PC-9 (cell line): ENCODE measurements at regions of chr9 and their contacts with region 1.

Region 1: GRCh38 chr9:74711341-74711740 is 176.4 kb downstream of the TRPM6 start:
- DNase-seq: no peak
- H3K4me3 ChIP-seq: no peak overlapping the region
- H3K27ac ChIP-seq: no peak overlapping the region
- H3K4me1 ChIP-seq: no peaks in the 10 kb centered on the region
- H3K27me3 ChIP-seq: no peaks in the 10 kb centered on the region
- CTCF ChIP-seq: no peak

Region 2: GRCh38 chr9:74645007-74645639 is 66.2 kb before region 1 on chr9:
- CTCF ChIA-PET with region 1: no interaction called
- POLR2A ChIA-PET with region 1: no interaction called
- intact Hi-C with region 1: loop called (anchors 10 kb)
- DNase-seq: no peak
- H3K4me3 ChIP-seq: no peak overlapping the region
- H3K27ac ChIP-seq: no peak overlapping the region
- H3K4me1 ChIP-seq: no peaks in the 10 kb centered on the region
- H3K27me3 ChIP-seq: no peaks in the 10 kb centered on the region
- CTCF ChIP-seq: peak; percentile 71

Region 3: GRCh38 chr9:74728176-74728575 is 16.8 kb after region 1 on chr9:
- CTCF ChIA-PET with region 1: no interaction called
- POLR2A ChIA-PET with region 1: interaction called, 10 read pairs
- intact Hi-C with region 1: no loop called
- DNase-seq: no peak
- H3K4me3 ChIP-seq: no peak overlapping the region
- H3K27ac ChIP-seq: no peak overlapping the region
- H3K4me1 ChIP-seq: no peaks in the 10 kb centered on the region
- H3K27me3 ChIP-seq: no peaks in the 10 kb centered on the region
- CTCF ChIP-seq: no peak

Region 4: DNA sequence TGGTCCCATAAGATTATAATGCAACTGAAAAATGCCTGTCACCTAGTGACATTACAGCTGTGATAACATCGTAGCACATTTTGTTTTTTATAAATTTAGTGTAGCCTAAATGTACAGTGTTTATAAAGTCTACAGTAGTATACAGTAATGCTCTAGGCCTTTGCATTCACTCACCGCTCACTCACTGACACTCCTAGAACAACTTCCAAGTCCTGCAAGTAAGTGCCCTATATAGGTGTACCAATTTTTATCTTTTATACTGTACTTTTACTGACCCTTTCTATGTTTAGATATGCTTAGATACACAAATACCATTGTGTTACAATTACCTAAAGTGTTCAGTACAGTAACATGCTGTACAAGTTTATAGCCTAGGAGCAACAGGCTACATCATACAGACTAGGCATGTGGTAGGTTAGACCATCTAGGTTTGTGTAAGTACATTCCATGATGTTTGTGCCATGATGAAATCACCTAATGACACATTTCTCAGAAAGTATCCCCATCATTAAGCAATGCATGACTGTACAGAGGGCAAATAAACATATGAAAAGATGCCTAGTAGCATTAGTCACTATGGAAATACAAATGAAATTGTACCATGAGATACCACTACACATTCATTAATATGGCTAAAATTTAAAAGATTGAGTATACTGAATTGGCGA is 48.8 kb after region 1 on chr9:
- CTCF ChIA-PET with region 1: no interaction called
- POLR2A ChIA-PET with region 1: no interaction called
- intact Hi-C with region 1: no loop called
- DNase-seq: peak in 1 of 2 experiments; percentile 82
- H3K4me3 ChIP-seq: no peak overlapping the region
- H3K27ac ChIP-seq: no peak overlapping the region
- H3K4me1 ChIP-seq: peaks cover 12% of the 10 kb centered on the region
- H3K27me3 ChIP-seq: no peaks in the 10 kb centered on the region
- CTCF ChIP-seq: no peak

Region 5: DNA sequence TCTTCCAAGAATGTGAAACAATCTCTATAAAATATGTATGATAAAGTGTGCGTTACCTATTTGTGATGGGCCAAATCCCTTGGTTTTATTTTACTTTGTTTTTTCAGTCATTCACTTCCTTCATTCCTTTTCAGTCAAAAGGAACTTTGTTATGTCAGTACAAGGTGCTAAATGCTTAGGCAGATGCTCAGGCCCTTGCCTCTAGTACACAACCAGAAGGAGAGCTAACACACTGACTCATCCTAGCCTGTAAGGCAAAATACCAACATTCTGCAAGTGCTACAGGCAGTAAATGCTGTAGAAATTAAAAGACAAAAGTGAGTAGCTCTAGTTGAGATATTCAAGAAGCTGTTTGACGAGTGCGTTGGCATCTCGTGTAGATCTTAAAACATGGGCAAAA is 127.0 kb after region 1 on chr9:
- CTCF ChIA-PET with region 1: no interaction called
- POLR2A ChIA-PET with region 1: no interaction called
- intact Hi-C with region 1: no loop called
- DNase-seq: peak; percentile 37 to 53
- H3K4me3 ChIP-seq: no peak overlapping the region
- H3K27ac ChIP-seq: no peak overlapping the region
- H3K4me1 ChIP-seq: no peaks in the 10 kb centered on the region
- H3K27me3 ChIP-seq: no peaks in the 10 kb centered on the region
- CTCF ChIP-seq: no peak